HepG2 (cell line): ENCODE measurements at regions of chr19 and their contacts with region 1.

Region 1: GRCh38 chr19:703651-704446 is 4.9 kb upstream of the PALM start:
- DNase-seq: peak; percentile 90
- ATAC-seq: peak; percentile 91
- H3K4me3 ChIP-seq: peak overlapping the region; percentile 72 to 83 (median 76)
- H3K27ac ChIP-seq: peak overlapping the region; percentile 69
- H3K4me1 ChIP-seq: peaks cover 45% of the 10 kb centered on the region
- H3K27me3 ChIP-seq: no peaks in the 10 kb centered on the region; a peak in 1 of 5 replicates
- CTCF ChIP-seq: peak; percentile 58
- EP300 ChIP-seq: no peak
- POLR2A ChIP-seq: peak; percentile 93 to 100
- RAD21 ChIP-seq: peak; percentile 22; the same call in 1 of the 2 replicates

Region 2: DNA sequence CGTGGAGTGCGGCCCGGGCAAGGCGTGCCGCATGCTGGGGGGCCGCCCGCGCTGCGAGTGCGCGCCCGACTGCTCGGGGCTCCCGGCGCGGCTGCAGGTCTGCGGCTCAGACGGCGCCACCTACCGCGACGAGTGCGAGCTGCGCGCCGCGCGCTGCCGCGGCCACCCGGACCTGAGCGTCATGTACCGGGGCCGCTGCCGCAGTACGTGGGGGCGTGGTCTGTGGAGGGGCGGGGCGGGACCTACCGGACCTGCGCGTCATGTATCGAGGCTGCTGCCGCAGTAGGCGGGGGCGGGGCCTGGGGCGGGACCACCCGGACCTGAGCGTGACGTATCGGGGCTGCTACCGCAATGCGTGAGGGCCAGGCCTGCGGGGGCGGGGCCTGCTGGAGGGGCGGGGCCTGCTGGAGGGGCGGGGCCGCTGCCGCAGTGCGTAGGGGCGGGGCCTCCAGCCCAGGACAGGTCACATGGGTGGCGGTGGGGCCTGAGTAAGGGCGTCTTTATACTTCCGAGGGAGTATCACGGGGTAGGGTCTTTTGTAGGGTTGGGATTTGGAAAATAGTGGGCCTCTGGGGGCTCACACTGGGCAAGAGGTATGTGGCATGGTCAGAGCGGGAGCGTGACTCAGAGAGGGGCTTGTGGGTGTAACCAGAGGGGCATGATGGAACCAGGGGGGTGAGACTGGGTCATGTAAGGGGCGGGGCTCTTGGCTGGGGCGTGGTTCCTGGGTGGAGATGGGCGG is 23.4 kb before region 1 on chr19:
- CTCF ChIA-PET with region 1: no interaction called
- POLR2A ChIA-PET with region 1: interaction called, 56 read pairs
- in situ Hi-C with region 1: no loop called
- intact Hi-C with region 1: no loop called
- DNase-seq: peak; percentile 93
- ATAC-seq: peak; percentile 70
- H3K4me3 ChIP-seq: peak overlapping the region; percentile 61 to 89 (median 63); a peak in 5 of 6 replicates
- H3K27ac ChIP-seq: peak overlapping the region; percentile 95
- H3K4me1 ChIP-seq: peaks cover 38% of the 10 kb centered on the region
- H3K27me3 ChIP-seq: peaks cover 0 to 7% of the 10 kb centered on the region in 2 experiments; a peak in 1 of 5 replicates
- CTCF ChIP-seq: peak; percentile 75
- EP300 ChIP-seq: no peak
- POLR2A ChIP-seq: peak; percentile 58 to 83
- RAD21 ChIP-seq: peak; percentile 88

Region 3: DNA sequence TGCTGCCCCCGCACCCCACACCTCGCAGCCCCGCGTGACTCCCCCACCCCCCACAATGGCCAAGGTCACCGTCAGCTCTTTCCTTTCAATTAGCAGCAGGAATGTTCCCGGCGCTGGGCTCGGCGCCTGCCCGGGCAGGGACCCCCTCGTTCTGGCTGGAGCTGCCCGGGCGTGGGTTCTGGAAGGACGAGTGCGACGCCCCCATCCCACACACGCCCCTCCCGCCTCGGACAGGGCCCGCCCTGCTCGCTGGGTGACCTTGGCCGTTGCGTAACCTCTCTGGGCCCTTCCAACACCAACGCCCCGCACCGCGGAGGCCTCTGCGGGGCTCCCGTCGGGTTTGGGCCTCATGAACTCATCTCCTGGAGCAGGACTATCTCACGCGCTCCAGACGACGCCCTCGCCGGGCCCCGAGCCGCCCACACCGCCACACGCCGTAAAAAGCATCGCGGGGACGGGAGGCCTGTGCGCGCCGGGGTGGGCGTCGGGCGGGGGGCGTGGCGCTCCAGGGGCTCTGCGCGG is 15.2 kb after region 1 on chr19:
- CTCF ChIA-PET with region 1: interaction called, 3 read pairs
- POLR2A ChIA-PET with region 1: interaction called, 18 read pairs
- in situ Hi-C with region 1: no loop called
- intact Hi-C with region 1: no loop called
- DNase-seq: peak; percentile 39
- ATAC-seq: peak; percentile 39
- H3K4me3 ChIP-seq: peak overlapping the region in 2 of 3 experiments; percentile 33 to 55; a peak in 3 of 6 replicates
- H3K27ac ChIP-seq: no peak overlapping the region
- H3K4me1 ChIP-seq: peaks cover 44% of the 10 kb centered on the region
- H3K27me3 ChIP-seq: no peaks in the 10 kb centered on the region
- CTCF ChIP-seq: 0 out of 2 replicates have a peak, but pooled peaks have one; percentile 23
- EP300 ChIP-seq: no peak
- POLR2A ChIP-seq: no peak
- RAD21 ChIP-seq: no peak

Region 4: GRCh38 chr19:737581-738093 is 33.8 kb after region 1 on chr19:
- CTCF ChIA-PET with region 1: no interaction called
- POLR2A ChIA-PET with region 1: interaction called, 27 read pairs
- in situ Hi-C with region 1: no loop called
- intact Hi-C with region 1: no loop called
- DNase-seq: peak; percentile 41
- ATAC-seq: peak; percentile 56
- H3K4me3 ChIP-seq: peak overlapping the region in 1 of 3 experiments; percentile 5; a peak in 1 of 6 replicates
- H3K27ac ChIP-seq: peak overlapping the region; percentile 88
- H3K4me1 ChIP-seq: peaks cover 48% of the 10 kb centered on the region
- H3K27me3 ChIP-seq: no peaks in the 10 kb centered on the region
- CTCF ChIP-seq: peak; percentile 90
- EP300 ChIP-seq: no peak
- POLR2A ChIP-seq: no peak
- RAD21 ChIP-seq: peak; percentile 53; the same call in 1 of the 2 replicates

Region 5: GRCh38 chr19:970695-971094 is 266.8 kb after region 1 on chr19:
- CTCF ChIA-PET with region 1: no interaction called
- POLR2A ChIA-PET with region 1: no interaction called
- in situ Hi-C with region 1: no loop called
- intact Hi-C with region 1: no loop called
- DNase-seq: no peak
- ATAC-seq: peak; percentile 13; the same call in 1 of the 3 replicates
- H3K4me3 ChIP-seq: no peak overlapping the region
- H3K27ac ChIP-seq: no peak overlapping the region
- H3K4me1 ChIP-seq: no peaks in the 10 kb centered on the region
- H3K27me3 ChIP-seq: no peaks in the 10 kb centered on the region
- CTCF ChIP-seq: peak; percentile 79
- EP300 ChIP-seq: no peak
- POLR2A ChIP-seq: no peak
- RAD21 ChIP-seq: peak; percentile 73; the same call in 1 of the 2 replicates